Heart left ventricle (tissue), 16 donors: ENCODE measurements at regions of chr3 and their contacts with region 1.

Region 1: DNA sequence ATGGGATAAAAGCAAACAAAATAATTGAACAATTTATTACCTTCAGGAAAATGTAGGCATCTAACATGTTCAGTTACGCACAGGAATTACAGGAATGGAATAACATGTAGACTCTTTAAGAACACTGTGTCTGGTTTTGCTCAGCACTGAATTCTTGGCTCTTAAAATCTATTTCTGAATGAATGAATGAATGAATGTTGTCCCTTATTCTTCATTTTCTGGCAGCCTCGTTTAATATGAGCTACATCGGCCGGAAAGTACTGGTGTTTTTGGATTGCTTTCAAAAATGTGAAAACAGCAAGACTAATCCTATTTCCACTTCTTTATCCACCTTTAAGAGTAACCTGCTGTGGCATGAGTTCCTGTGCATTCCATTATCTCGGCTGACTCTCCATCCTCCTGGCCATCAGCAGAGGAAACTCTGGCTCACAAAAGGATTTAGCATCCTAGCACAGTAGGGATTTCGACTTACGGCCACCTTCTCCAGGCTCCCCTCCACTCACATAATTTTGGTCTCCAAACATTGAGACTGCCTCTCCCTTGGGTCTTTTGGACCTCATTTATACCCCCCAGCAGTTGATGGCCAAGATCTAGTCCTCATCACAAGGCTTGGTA is 145.3 kb downstream of the FOXP1 start:
- DNase-seq: no peak
- ATAC-seq: no peak
- H3K4me3 ChIP-seq: no peak overlapping the region
- H3K27ac ChIP-seq: no peak overlapping the region
- H3K4me1 ChIP-seq: peaks cover 0 to 53% (median 25%) of the 10 kb centered on the region in 12 donors
- H3K27me3 ChIP-seq: no peaks in the 10 kb centered on the region
- CTCF ChIP-seq: no peak
- POLR2A ChIP-seq: no peak

Region 2: DNA sequence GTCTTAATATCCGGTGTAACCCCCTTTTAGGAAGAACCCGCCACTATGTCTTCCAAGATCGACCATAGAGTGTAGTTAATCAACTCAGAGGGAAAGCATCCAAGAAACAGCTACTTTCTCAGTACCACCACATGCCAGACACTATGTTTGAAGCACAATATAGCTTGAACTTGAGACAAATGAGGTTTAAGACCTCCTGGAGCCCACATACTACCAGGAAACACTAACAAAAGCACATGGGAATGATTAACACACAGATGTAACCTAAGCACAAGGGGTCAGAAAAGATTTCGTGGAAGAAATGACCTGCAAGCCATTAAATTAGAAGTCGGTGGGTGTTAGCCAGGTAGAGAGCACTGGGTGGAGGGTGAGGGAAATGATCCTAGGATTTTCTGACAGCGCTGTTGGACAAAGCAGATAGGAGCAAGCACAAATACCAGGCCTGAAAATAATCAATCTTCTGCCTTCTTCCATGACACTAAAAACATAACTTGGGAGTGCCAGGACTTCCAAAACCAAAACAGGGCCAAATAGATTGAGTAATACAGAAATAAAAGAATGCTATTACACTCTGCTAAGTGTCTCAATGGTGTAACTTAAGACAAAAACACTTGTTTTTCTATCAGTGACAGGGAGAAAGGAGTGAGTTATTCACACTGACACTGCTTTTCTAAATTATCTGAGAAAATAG is 68.3 kb before region 1 on chr3:
- intact Hi-C with region 1: no loop called
- DNase-seq: no peak
- ATAC-seq: peak in 3 of 4 donors; percentile 24 to 51 (median 38)
- H3K4me3 ChIP-seq: no peak overlapping the region
- H3K27ac ChIP-seq: no peak overlapping the region
- H3K4me1 ChIP-seq: peaks cover 0 to 16% (median 7%) of the 10 kb centered on the region in 12 donors
- H3K27me3 ChIP-seq: no peaks in the 10 kb centered on the region
- CTCF ChIP-seq: no peak
- POLR2A ChIP-seq: no peak

Region 3: DNA sequence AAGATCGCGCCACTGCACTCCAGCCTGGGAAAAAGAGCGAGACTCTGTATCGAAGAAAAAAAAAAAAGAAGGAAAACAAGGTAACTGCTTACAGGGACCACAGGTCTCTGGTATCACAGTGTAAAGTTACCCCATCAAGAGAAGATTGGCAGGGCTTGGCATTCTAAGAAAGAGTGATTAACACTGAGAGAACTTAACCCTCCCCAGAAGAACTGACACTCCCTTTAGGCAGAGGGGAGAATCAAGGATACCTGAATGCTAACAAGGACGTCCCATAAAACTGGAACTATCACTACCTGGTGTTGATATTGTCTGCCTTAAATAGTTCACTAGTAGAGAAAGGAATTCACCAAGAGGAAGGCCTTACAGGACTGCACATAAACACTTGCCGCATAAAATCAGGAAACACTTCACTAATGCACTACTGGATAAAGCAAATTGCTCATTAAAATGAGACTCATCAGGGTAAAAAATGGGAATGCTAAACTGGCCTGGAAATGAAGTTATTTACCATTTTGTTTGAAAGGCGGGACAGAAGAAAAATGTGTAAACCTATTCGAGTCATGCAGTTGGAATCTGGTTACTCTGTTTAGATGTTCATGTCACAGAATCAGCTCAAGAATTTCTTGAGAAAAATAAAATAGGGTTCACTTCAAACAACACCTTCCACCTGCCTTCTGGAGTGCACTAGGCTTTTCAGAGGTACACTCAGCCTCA is 23.7 kb after region 1 on chr3:
- intact Hi-C with region 1: loop called in 1 of 10 experiments (anchors 2 kb)
- DNase-seq: no peak
- ATAC-seq: no peak
- H3K4me3 ChIP-seq: no peak overlapping the region
- H3K27ac ChIP-seq: no peak overlapping the region
- H3K4me1 ChIP-seq: peaks cover 0 to 20% (median 4%) of the 10 kb centered on the region in 12 donors
- H3K27me3 ChIP-seq: no peaks in the 10 kb centered on the region
- CTCF ChIP-seq: no peak
- POLR2A ChIP-seq: no peak